Dorsolateral prefrontal cortex (tissue), 120 donors: ENCODE measurements at regions of chr1 and their contacts with region 1.

Region 1: GRCh38 chr1:24635195-24635843 is 7.8 kb upstream of the SRRM1 start:
- DNase-seq: no peak
- H3K4me3 ChIP-seq: no peak overlapping the region
- H3K27ac ChIP-seq: peak overlapping the region in 3 of 59 donors; percentile 6 to 36 (median 11)
- H3K27me3 ChIP-seq: peaks cover 0 to 3% (median 0%) of the 10 kb centered on the region in 45 donors
- CTCF ChIP-seq: peak; percentile 35 to 89 (median 73)

Region 2: GRCh38 chr1:24201941-24202440 is 433.3 kb before region 1 on chr1:
- intact Hi-C with region 1: loop called (anchors 5 kb)
- DNase-seq: peak in 9 of 10 donors; percentile 35 to 91 (median 73)
- H3K4me3 ChIP-seq: no peak overlapping the region
- H3K27ac ChIP-seq: peak overlapping the region in 16 of 59 donors; percentile 1 to 73 (median 44)
- H3K27me3 ChIP-seq: no peaks in the 10 kb centered on the region
- CTCF ChIP-seq: peak; percentile 70 to 95 (median 82)

Region 3: DNA sequence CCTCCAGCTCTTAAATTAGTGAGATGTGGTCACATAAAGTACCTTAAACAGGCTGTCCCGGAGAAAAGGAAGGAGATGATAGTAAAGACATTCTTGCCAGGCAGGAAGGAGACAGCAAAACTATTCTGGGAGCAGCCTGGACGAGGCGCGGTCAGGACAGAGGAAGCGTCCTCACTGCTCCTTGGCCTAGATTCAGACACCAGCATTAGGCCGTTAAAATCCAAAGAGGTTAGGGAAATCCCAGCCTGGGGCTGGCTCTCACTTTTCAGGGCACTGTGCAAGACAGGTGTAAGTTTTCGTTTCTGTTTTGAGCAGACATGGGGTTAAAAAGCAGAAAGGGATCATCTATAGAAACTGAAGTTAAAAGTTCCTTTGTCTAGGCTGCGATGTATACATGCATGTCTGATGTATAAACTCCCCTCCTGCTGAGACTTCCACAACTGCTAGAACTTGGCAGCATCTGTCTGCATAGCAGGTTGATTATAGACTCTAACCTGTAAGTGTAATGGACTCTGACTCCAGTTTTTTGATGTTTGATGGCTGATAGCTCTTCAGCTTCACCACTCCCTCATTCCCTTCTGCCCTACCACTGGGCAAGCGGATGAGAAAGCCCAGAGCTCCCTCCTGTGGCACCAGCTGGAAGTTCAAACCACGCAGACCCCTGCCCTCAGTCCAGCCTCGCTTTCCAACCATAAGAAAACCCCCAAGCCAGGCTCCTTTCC is 243.3 kb before region 1 on chr1:
- intact Hi-C with region 1: loop called in 1 of 2 experiments (anchors 5 kb)
- DNase-seq: peak in 8 of 10 donors; percentile 46 to 75 (median 60)
- H3K4me3 ChIP-seq: peak overlapping the region in 35 of 59 donors; percentile 0 to 49 (median 26)
- H3K27ac ChIP-seq: peak overlapping the region; percentile 28 to 93 (median 80)
- H3K27me3 ChIP-seq: no peaks in the 10 kb centered on the region
- CTCF ChIP-seq: peak; percentile 30 to 90 (median 78)

Region 4: GRCh38 chr1:24415334-24415909 is 219.9 kb before region 1 on chr1 and contains the start of gene NIPAL3:
- intact Hi-C with region 1: loop called (anchors 5 to 10 kb)
- DNase-seq: peak; percentile 91 to 98 (median 97)
- H3K4me3 ChIP-seq: peak within 1 kb of the TSS; percentile 57 to 98 (median 78)
- H3K27ac ChIP-seq: peak within 1 kb of the TSS in 58 of 59 donors; percentile 36 to 90 (median 78)
- H3K27me3 ChIP-seq: no peaks in the 10 kb centered on the region
- CTCF ChIP-seq: peak; percentile 49 to 85 (median 69)
- total RNA-seq, gene NIPAL3: 61.8 to 202 (median 104) TPM

Region 5: GRCh38 chr1:24513706-24514105 is 121.6 kb before region 1 on chr1:
- intact Hi-C with region 1: no loop called
- DNase-seq: no peak
- H3K4me3 ChIP-seq: no peak overlapping the region
- H3K27ac ChIP-seq: peak overlapping the region in 1 of 59 donors; percentile 49
- H3K27me3 ChIP-seq: peaks cover 0 to 31% (median 0%) of the 10 kb centered on the region in 45 donors
- CTCF ChIP-seq: no peak

Region 6: DNA sequence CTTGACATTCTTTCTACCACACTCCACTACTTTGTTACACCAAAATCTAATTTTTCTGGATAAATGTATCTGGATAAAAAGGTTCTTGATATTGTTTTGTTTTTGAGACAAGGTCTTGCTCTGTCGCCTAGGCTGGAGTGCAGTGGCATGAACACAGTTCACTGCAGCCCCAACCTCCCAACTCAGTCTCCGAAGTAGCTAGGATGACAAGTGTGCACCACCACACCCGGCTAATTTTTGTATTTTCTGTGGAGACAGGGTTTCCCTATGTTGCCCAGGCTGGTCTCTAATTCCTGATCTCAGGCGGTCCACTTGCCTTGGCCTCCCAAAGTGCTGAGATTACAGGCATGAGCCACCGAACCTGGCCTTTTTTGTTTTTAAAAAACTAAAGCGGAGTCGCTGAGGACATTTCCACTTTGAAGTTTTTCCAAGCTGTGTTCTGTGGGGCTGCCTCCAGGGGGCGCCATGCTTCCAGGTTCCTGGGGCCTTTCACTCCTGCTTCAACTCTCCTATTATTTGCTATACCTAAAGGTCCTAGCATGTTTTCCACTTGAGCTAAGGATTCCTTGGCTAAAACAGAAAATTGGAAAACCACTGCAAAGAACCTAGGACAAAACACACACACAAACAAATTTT is 93.5 kb before region 1 on chr1:
- intact Hi-C with region 1: loop called (anchors 2 to 5 kb)
- DNase-seq: peak in 2 of 10 donors; percentile 35 to 51
- H3K4me3 ChIP-seq: no peak overlapping the region
- H3K27ac ChIP-seq: no peak overlapping the region
- H3K27me3 ChIP-seq: peaks cover 0 to 7% (median 0%) of the 10 kb centered on the region in 45 donors
- CTCF ChIP-seq: peak; percentile 42 to 88 (median 68)

Region 7: DNA sequence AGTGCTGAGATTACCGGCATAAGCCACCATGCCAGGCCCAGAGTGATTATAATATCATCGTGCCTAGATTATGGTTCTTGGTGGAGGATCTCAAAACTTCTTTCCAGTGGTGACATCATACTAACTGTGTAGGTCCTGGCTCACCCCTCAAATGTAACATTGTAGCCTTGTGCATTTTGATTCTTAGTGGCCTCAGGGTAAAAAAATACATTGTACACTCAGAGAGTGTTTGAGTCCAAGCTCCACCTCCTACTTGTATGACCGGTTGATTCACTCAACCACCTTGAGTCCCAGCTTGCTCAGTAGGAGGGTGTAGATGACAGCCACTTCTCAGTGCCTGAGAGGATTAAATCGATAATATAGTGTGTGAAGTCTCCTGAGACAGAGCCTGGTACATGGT is 41.2 kb before region 1 on chr1:
- intact Hi-C with region 1: loop called (anchors 5 kb)
- DNase-seq: no peak
- H3K4me3 ChIP-seq: no peak overlapping the region
- H3K27ac ChIP-seq: no peak overlapping the region
- H3K27me3 ChIP-seq: peaks cover 0 to 4% (median 0%) of the 10 kb centered on the region in 45 donors
- CTCF ChIP-seq: no peak